Gastrocnemius medialis (tissue), 4 donors: ENCODE measurements at regions of chr10 and their contacts with region 1.

Region 1: DNA sequence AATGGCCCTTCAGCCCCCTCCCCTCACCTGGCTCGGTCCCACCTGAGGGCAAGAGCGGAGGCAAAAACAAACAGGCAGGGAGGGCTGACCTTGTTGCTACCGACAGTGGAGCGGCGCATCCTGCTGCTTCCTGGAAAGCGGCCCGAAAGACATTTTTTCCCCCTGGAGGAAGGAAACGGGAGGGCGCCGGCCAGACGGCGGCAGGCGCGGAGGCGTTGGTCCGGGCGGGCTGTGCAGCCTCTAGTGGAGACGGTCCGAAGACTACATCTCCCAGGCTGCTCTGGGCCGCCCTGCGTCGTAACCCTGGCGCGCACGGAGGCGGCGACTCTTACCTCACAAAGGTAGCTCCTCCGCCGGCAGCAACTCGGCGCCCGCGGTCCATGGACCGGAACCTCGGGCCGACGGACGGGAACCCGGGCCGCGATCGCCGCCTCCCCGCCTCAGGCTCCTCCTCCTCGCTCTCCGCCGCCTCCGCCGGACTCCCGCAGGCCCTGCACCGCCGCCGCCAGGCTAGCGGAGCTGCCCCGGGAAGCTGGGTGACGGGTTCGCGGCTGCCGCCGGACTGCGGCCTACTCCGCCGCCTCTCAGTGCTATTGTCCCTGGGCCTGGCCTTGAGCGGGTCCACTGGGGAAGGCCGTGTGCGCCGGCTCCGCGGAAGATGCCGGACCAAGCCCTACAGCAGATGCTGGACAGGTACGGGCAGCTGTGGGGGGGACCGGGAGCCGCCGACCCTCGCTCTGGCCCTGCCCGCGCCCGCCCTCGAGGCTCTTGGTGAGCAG is at the starts of genes CPEB3 and MARCHF5:
- DNase-seq: peak; percentile 94 to 96
- ATAC-seq: peak; percentile 91 to 94
- H3K4me3 ChIP-seq: peak within 1 kb of the TSS; percentile 67 to 93 (median 88)
- H3K27ac ChIP-seq: peak within 1 kb of the TSS; percentile 89 to 98 (median 93)
- H3K4me1 ChIP-seq: peaks cover 11 to 18% of the 10 kb centered on the region in 2 donors
- H3K27me3 ChIP-seq: no peaks in the 10 kb centered on the region
- CTCF ChIP-seq: peak; percentile 78 to 86 (median 83)
- POLR2A ChIP-seq: peak; percentile 79 to 87
- total RNA-seq, gene CPEB3: 14.5 to 22.5 (median 18.0) TPM
- total RNA-seq, gene MARCHF5: 13.0 to 24.4 (median 15.4) TPM

Region 2: GRCh38 chr10:91923371-91924211 is 367.4 kb before region 1 on chr10 and contains the start of gene BTAF1:
- in situ Hi-C with region 1: no loop called
- intact Hi-C with region 1: loop called (anchors 1 kb)
- DNase-seq: peak; percentile 81 to 85
- ATAC-seq: peak; percentile 98 to 99
- H3K4me3 ChIP-seq: peak within 1 kb of the TSS; percentile 67 to 84 (median 77)
- H3K27ac ChIP-seq: peak within 1 kb of the TSS; percentile 90 to 96 (median 94)
- H3K4me1 ChIP-seq: peaks cover 21 to 31% of the 10 kb centered on the region in 2 donors
- H3K27me3 ChIP-seq: no peaks in the 10 kb centered on the region
- CTCF ChIP-seq: peak in 2 of 5 experiments; percentile 10 to 14
- POLR2A ChIP-seq: peak; percentile 91 to 92
- total RNA-seq, gene BTAF1: 10.5 to 23.7 (median 11.3) TPM

Region 3: GRCh38 chr10:92103376-92104090 is 187.5 kb before region 1 on chr10:
- in situ Hi-C with region 1: loop called in 2 of 4 experiments (anchors 10 to 25 kb)
- intact Hi-C with region 1: loop called (anchors 5 kb)
- DNase-seq: no peak
- ATAC-seq: no peak
- H3K4me3 ChIP-seq: no peak overlapping the region
- H3K27ac ChIP-seq: peak overlapping the region in 3 of 4 donors; percentile 74 to 83 (median 80)
- H3K4me1 ChIP-seq: peaks cover 43 to 49% of the 10 kb centered on the region in 2 donors
- H3K27me3 ChIP-seq: no peaks in the 10 kb centered on the region
- CTCF ChIP-seq: no peak
- POLR2A ChIP-seq: no peak

Region 4: DNA sequence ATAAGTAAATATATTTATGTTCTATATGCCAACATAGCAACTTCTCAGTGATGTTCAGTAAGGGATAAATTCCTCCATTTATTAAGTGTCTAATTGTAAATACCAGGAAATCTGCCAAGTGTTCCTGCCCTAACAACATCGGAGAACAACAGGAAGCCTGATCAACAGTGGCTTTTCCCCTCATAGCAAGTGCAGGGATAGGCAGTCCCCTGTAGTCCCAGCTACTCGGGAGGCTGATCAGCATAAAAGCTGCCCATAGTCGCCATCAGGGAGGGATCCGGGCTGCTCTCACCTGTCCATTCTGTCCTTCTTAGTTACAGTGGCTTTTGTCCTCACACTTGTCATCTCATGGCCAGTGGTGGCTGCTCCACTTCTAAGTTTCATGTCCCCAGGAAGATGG is 141.6 kb after region 1 on chr10:
- in situ Hi-C with region 1: no loop called
- intact Hi-C with region 1: loop called (anchors 5 kb)
- DNase-seq: no peak
- ATAC-seq: peak in 1 of 2 donors; percentile 30
- H3K4me3 ChIP-seq: no peak overlapping the region
- H3K27ac ChIP-seq: peak overlapping the region; percentile 35 to 61 (median 49)
- H3K4me1 ChIP-seq: peaks cover 11 to 12% of the 10 kb centered on the region in 2 donors
- H3K27me3 ChIP-seq: no peaks in the 10 kb centered on the region
- CTCF ChIP-seq: no peak
- POLR2A ChIP-seq: no peak